ENCODE measurements at regions of chr19 and their contacts with region 1.

Region 1: DNA sequence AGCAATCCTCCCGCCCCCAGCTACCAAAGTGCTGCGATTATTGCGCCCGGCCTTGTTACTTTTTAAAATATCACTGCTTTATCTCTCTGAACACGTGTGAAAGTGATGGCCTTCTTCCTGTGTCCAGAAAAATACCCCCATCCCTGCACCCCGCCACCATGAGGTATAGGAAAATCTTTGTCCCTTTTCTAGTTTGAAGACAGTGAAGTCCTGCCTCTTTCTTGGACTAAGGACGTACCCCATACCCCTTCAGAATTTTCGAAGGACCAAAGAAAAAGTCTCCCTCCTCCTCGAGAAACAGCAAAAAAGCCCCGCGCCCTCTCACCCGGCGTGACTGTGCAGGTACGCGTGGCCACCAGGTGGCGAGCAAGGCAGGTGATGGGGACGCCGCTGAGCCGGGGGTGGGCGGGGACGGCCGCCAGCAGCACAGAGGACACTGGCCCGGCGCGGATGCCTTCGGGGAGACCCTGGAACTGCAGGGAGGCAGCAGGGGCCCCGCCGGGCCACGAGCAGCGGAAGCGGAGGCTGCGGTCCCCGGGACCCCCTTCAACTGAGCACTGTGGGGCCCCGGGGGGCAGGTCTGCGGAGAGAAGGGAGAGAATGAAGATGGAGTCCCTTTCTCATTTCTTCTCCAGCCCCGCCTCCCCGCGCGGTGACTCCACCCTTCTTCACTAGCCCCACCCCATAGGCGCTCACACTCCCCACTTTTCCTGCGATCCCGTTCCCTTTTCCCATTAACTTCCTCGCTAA is 3.2 kb downstream of the VSIG10L start:
- DNase-seq: peak; percentile 93
- ATAC-seq: peak; percentile 60
- H3K4me3 ChIP-seq: peak overlapping the region; percentile 11 to 77 (median 58)
- H3K4me3 Mint-ChIP-seq: peak overlapping the region; percentile 97
- H3K27ac ChIP-seq: no peak overlapping the region
- H3K27ac Mint-ChIP-seq: peak overlapping the region; percentile 80
- H3K4me1 ChIP-seq: peaks cover 22 to 42% of the 10 kb centered on the region in 2 donors
- H3K4me1 Mint-ChIP-seq: peaks cover 36% of the 10 kb centered on the region
- H3K27me3 ChIP-seq: no peaks in the 10 kb centered on the region
- H3K27me3 Mint-ChIP-seq: no peaks in the 10 kb centered on the region
- CTCF ChIP-seq: peak; percentile 87

Region 2: GRCh38 chr19:51108066-51108804 is 230.5 kb before region 1 on chr19 and contains the start of gene CTU1:
- CTCF ChIA-PET with region 1: no interaction called
- POLR2A ChIA-PET with region 1: no interaction called
- intact Hi-C with region 1: loop called (anchors 2 kb)
- DNase-seq: peak; percentile 99
- ATAC-seq: peak; percentile 96
- H3K4me3 ChIP-seq: peak within 1 kb of the TSS; percentile 68 to 88 (median 80)
- H3K4me3 Mint-ChIP-seq: peak within 1 kb of the TSS; percentile 99
- H3K27ac ChIP-seq: peak within 1 kb of the TSS; percentile 57 to 76
- H3K27ac Mint-ChIP-seq: peak within 1 kb of the TSS; percentile 97
- H3K4me1 ChIP-seq: peaks cover 11 to 16% of the 10 kb centered on the region in 2 donors
- H3K4me1 Mint-ChIP-seq: peaks cover 35% of the 10 kb centered on the region
- H3K27me3 ChIP-seq: peaks cover 0 to 6% (median 2%) of the 10 kb centered on the region in 4 experiments
- H3K27me3 Mint-ChIP-seq: no peaks in the 10 kb centered on the region
- CTCF ChIP-seq: no peak
- total RNA-seq, gene CTU1: 8.1 and 8.2 TPM in 2 replicates

Region 3: DNA sequence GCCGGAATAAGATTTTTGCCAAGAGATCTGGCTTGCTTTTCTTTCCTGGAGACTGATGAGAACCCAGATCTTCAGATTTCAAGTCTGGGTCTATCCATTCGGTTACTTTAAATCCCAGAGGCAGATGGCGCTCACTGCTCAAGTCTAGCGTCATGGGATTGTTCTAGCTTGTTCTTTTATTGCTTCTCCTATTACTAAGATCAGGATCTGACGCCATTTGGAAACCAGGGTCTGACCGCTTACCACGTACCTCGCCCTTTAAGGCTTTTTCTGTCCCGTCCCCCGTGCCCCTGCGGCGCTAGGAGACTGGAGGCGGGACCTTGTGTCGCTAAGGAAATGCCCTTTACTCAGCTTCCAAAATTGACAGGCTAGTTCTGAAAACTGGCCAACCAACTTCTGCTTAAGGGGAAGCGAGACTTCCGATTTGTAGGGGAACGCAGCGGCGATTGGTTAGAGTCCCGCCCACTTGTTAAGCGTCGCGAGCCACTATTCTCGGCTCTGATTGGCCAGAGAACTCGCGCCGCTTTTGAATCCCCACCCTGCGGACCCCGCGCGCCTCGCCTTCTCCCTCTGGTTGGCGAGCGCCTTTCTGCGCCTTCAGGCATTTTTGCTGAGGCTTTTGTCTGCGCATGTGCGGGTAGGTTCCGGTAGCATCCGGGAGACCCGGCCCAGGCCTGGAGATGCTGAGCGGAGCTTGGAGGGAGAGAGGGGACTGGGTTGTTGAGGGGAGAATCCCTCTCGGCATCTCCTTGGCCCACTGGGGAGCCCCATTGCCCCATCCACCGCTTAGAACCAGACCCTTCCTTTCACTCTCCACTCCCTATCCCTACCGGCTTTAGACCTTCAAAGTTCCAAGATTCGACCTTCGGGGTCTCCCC is 55.5 kb after region 1 on chr19:
- CTCF ChIA-PET with region 1: interaction called, 19 read pairs
- POLR2A ChIA-PET with region 1: interaction called, 11 read pairs
- intact Hi-C with region 1: loop called (anchors 1 kb)
- DNase-seq: peak; percentile 95
- ATAC-seq: peak; percentile 92
- H3K4me3 ChIP-seq: peak overlapping the region; percentile 43 to 74 (median 62)
- H3K4me3 Mint-ChIP-seq: peak overlapping the region; percentile 85
- H3K27ac ChIP-seq: peak overlapping the region; percentile 63 to 73
- H3K27ac Mint-ChIP-seq: peak overlapping the region; percentile 78
- H3K4me1 ChIP-seq: peaks cover 22 to 33% of the 10 kb centered on the region in 2 donors
- H3K4me1 Mint-ChIP-seq: peaks cover 30% of the 10 kb centered on the region
- H3K27me3 ChIP-seq: peaks cover 0 to 4% (median 0%) of the 10 kb centered on the region in 4 experiments
- H3K27me3 Mint-ChIP-seq: no peaks in the 10 kb centered on the region
- CTCF ChIP-seq: peak; percentile 13

Region 4: GRCh38 chr19:51422053-51422448 is 83.3 kb after region 1 on chr19:
- CTCF ChIA-PET with region 1: interaction called, 32 read pairs
- POLR2A ChIA-PET with region 1: interaction called, 10 read pairs
- intact Hi-C with region 1: loop called (anchors 1 kb)
- DNase-seq: peak; percentile 87
- ATAC-seq: peak; percentile 39
- H3K4me3 ChIP-seq: no peak overlapping the region
- H3K4me3 Mint-ChIP-seq: peak overlapping the region; percentile 39
- H3K27ac ChIP-seq: no peak overlapping the region
- H3K27ac Mint-ChIP-seq: no peak overlapping the region
- H3K4me1 ChIP-seq: peaks cover 19 to 33% of the 10 kb centered on the region in 2 donors
- H3K4me1 Mint-ChIP-seq: peaks cover 29% of the 10 kb centered on the region
- H3K27me3 ChIP-seq: peaks cover 0 to 15% (median 3%) of the 10 kb centered on the region in 4 experiments
- H3K27me3 Mint-ChIP-seq: peaks cover 10% of the 10 kb centered on the region
- CTCF ChIP-seq: peak; percentile 99

Region 5: DNA sequence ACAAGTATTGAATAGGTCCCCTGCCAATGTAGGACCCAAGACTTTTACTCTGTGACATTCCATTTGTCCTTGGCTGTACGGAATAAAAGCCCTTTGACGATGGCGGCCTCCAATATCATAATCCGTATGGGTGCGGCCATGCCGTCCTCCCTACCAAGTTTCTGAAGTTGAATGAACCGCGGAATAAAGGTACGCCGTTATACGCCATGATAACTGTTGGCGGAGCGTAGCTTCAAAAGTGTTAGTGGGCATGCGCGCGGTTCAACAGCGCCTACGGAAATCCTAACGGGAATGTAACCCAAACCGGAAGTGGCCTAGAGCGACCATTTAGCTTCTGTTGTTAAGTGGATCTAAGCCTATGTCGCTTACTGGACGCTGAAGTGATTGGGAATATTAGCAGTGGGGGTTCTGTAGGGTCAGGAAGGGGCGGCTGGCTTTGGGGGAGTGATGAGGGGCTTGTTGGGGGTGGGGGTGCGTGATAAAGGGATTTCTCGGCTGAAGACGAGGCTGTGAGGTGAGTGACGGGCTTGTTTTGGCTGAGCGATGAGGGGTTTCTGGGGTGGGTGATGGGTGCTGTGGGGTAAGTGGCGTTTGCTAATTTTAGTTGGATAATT is 232.3 kb after region 1 on chr19 and contains the start of gene ZNF175:
- CTCF ChIA-PET with region 1: no interaction called
- POLR2A ChIA-PET with region 1: no interaction called
- intact Hi-C with region 1: loop called (anchors 2 kb)
- DNase-seq: peak; percentile 91
- ATAC-seq: peak; percentile 96
- H3K4me3 ChIP-seq: peak within 1 kb of the TSS; percentile 59 to 84 (median 81)
- H3K4me3 Mint-ChIP-seq: peak within 1 kb of the TSS; percentile 88
- H3K27ac ChIP-seq: peak within 1 kb of the TSS in 1 of 2 donors; percentile 59
- H3K27ac Mint-ChIP-seq: peak within 1 kb of the TSS; percentile 83
- H3K4me1 ChIP-seq: peaks cover 19% of the 10 kb centered on the region in 2 donors
- H3K4me1 Mint-ChIP-seq: peaks cover 38% of the 10 kb centered on the region
- H3K27me3 ChIP-seq: no peaks in the 10 kb centered on the region
- H3K27me3 Mint-ChIP-seq: no peaks in the 10 kb centered on the region
- CTCF ChIP-seq: no peak
- total RNA-seq, gene ZNF175: 31.3 and 33.0 TPM in 2 replicates

Region 6: DNA sequence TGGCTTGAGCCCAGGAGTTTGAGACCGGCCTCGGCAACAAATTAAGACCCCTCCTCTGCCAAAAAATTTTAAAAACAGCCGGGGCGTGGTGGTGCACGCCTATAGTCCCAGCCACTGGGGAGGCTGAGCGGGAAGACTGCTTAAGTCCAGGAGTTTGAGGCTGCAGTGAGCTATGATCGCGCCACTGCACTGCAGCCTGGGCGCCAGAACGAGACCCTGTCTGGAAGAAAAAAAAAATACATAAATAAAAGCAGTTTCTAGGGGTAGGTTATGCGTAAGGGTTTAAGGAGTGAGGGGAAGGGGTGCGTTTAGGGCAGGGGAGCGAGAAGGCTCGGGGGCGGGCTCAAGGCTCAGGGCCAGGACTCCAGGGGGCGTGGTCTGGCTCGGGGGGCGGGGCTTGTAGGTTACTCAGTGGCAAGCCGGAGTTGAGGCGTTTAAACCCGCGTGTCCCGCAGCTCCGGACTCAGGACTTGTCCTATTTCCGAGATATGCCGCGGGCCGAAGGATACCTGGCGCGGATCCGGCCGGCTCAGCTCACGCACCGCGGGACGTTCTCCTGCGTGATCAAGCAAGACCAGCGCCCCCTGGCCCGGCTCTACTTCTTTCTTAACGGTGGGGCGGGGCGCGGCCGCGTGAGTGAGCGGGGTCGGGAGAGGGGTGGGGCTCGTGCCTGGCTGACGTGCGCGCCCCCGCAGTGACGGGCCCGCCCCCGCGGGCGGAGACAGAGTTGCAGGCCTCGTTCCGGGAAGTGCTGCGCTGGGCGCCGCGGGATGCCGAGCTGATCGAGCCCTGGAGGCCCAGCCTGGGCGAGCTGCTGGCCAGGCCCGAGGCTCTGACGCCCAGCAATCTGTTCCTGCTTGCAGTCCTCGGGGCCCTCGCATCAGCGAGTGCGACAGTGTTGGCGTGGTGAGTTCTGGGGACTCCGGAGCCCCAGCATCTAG is 365.1 kb after region 1 on chr19:
- CTCF ChIA-PET with region 1: no interaction called
- POLR2A ChIA-PET with region 1: no interaction called
- intact Hi-C with region 1: loop called (anchors 2 kb)
- DNase-seq: peak; percentile 98
- ATAC-seq: peak; percentile 92
- H3K4me3 ChIP-seq: peak overlapping the region; percentile 51 to 74 (median 68)
- H3K4me3 Mint-ChIP-seq: peak overlapping the region; percentile 91
- H3K27ac ChIP-seq: peak overlapping the region; percentile 64 to 84
- H3K27ac Mint-ChIP-seq: peak overlapping the region; percentile 90
- H3K4me1 ChIP-seq: peaks cover 22 to 31% of the 10 kb centered on the region in 2 donors
- H3K4me1 Mint-ChIP-seq: peaks cover 36% of the 10 kb centered on the region
- H3K27me3 ChIP-seq: peaks cover 0 to 30% (median 8%) of the 10 kb centered on the region in 4 experiments
- H3K27me3 Mint-ChIP-seq: peaks cover 23% of the 10 kb centered on the region
- CTCF ChIP-seq: peak; percentile 60

Measured in B cell (primary cell).